ENCODE measurements at regions of chr11 and their contacts with region 1.

Region 1: GRCh38 chr11:18987454-18988231 is 48.4 kb upstream of the MRGPRX1 start:
- DNase-seq: peak; percentile 86
- H3K4me3 ChIP-seq: no peak overlapping the region
- H3K27ac ChIP-seq: peak overlapping the region; percentile 39
- H3K4me1 ChIP-seq: peaks cover 11% of the 10 kb centered on the region
- H3K27me3 ChIP-seq: peaks cover 13% of the 10 kb centered on the region
- CTCF ChIP-seq: no peak

Region 2: GRCh38 chr11:18927550-18928322 is 59.9 kb before region 1 on chr11:
- CTCF ChIA-PET with region 1: no interaction called
- dilution Hi-C with region 1: no loop called
- in situ Hi-C with region 1: no loop called
- intact Hi-C with region 1: no loop called
- DNase-seq: peak; percentile 29
- H3K4me3 ChIP-seq: no peak overlapping the region
- H3K27ac ChIP-seq: no peak overlapping the region
- H3K4me1 ChIP-seq: no peaks in the 10 kb centered on the region
- H3K27me3 ChIP-seq: peaks cover 14% of the 10 kb centered on the region
- CTCF ChIP-seq: peak in 1 of 2 donors; percentile 48

Region 3: DNA sequence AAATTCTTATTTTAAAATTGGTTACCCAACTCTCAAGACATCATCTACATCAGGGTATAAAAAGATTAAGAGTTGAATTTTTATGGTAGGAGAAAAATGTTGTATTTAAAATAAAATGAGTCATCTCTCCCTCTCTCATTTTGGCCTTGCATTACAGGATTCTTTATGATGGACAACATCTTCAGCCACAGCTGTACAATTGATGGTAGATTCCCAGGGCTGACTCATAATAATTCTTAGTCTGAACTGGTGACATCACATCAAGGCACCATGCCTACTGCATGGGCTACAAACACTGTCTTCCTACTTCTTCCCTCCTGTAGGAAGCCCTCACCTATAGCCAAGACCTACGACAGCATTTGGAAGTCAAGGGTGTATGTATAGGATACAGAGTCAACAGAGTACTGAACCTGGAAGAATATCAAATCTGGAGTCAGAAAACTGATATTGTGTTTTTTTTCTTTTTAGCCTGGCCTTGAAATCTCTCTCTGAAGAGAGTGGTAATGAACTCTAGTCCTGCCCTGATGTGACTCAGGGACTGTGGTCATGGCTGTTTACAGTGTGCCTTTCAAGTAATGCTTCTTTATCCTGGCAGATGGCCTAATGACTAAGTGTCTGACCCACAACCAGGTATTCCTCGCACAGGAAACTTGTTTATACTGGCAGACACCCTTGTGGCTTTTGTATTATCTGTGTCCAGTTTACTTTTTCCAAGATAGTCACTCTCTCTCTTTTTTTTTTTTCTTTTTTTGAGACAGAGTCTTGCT is 40.4 kb after region 1 on chr11:
- CTCF ChIA-PET with region 1: no interaction called
- dilution Hi-C with region 1: no loop called
- in situ Hi-C with region 1: no loop called
- intact Hi-C with region 1: loop called (anchors 1 kb)
- DNase-seq: peak; percentile 98
- H3K4me3 ChIP-seq: no peak overlapping the region
- H3K27ac ChIP-seq: peak overlapping the region; percentile 76
- H3K4me1 ChIP-seq: peaks cover 14% of the 10 kb centered on the region
- H3K27me3 ChIP-seq: peaks cover 15% of the 10 kb centered on the region
- CTCF ChIP-seq: no peak

Region 4: DNA sequence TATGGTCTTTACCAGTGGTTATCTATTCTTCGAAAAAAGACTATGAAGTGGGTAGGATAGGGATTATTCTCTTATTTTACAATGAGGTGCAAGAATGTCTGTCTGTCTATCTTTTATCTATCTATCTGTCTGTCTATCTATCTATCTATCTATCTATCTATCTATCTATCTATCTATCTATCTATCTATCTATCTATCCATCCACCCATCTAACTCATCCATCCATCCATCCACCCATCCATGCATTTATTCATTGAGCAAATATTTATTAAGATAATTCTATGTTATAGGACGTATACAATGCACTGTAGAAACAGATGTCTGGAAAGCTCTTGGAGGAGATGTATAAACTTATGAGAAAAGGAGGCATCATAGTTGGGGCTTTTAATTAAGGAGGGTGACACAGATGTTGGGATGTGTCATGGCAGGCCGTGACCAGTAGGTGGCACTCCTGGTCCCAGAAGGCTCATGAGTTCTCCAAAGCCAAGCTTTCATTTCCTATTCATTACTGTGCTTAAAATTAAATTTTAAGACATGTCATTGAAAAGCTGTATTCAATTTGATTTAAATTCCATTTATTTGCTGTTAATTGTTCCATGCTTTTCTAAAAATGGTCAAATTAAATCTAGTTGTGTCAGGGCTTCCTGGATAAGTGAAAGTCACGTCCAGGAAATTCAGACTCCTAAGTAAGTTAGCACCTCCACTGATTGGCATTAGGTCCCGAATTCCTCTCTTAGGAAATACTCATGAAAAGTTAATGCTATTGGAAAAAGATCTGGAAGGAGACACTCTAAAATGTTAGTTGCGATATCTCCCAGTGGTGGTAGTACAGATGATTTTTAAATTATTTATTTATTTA is 272.1 kb after region 1 on chr11:
- CTCF ChIA-PET with region 1: no interaction called
- dilution Hi-C with region 1: no loop called
- in situ Hi-C with region 1: no loop called
- intact Hi-C with region 1: no loop called
- DNase-seq: peak; percentile 36
- H3K4me3 ChIP-seq: no peak overlapping the region
- H3K27ac ChIP-seq: no peak overlapping the region
- H3K4me1 ChIP-seq: no peaks in the 10 kb centered on the region
- H3K27me3 ChIP-seq: no peaks in the 10 kb centered on the region
- CTCF ChIP-seq: peak; percentile 94 to 99